Activated CD4-positive, alpha-beta T cell treated with anti-CD3 and anti-CD28 coated beads, Interleukin-2, amount 10 ng/mL, durations not matched to agents 7 days and 5 days (primary cell): ENCODE measurements at regions of chrX and their contacts with region 1.

Region 1: GRCh38 chrX:130060122-130061069 is 49.9 kb downstream of the ELF4 start:
- DNase-seq: peak; percentile 73
- H3K4me3 Mint-ChIP-seq: peak overlapping the region; percentile 68
- H3K27ac Mint-ChIP-seq: peak overlapping the region; percentile 72
- H3K4me1 Mint-ChIP-seq: peaks cover 9% of the 10 kb centered on the region
- H3K27me3 Mint-ChIP-seq: no peaks in the 10 kb centered on the region

Region 2: GRCh38 chrX:129925305-129926092 is 134.9 kb before region 1 on chrX:
- CTCF ChIA-PET with region 1: interaction called, 27 read pairs
- POLR2A ChIA-PET with region 1: no interaction called
- DNase-seq: peak; percentile 79
- H3K4me3 Mint-ChIP-seq: no peak overlapping the region
- H3K27ac Mint-ChIP-seq: peak overlapping the region; percentile 36
- H3K4me1 Mint-ChIP-seq: peaks cover 6% of the 10 kb centered on the region
- H3K27me3 Mint-ChIP-seq: no peaks in the 10 kb centered on the region

Region 3: DNA sequence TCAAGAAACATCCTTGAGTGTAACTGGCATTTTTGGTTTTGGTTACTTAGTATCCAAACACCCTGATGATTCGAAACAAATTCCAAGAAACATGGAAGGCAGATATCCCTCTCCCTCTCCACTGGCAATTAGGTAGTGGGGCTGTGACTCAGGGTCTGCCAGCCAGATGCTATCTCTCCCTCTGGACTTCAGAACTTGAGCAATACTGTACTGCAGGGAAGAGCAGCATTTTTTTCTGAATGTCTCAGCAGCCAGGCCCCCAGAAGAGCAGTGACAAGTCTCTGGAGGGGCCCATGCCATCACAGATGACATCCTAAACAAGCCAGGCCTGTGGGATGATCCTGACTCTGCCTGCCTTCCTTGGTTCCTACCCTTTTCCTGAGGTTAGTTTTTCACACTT is 115.2 kb before region 1 on chrX:
- CTCF ChIA-PET with region 1: no interaction called
- POLR2A ChIA-PET with region 1: no interaction called
- DNase-seq: no peak
- H3K4me3 Mint-ChIP-seq: no peak overlapping the region
- H3K27ac Mint-ChIP-seq: no peak overlapping the region
- H3K4me1 Mint-ChIP-seq: no peaks in the 10 kb centered on the region
- H3K27me3 Mint-ChIP-seq: peaks cover 7% of the 10 kb centered on the region

Region 4: GRCh38 chrX:130024127-130024526 is 36.3 kb before region 1 on chrX:
- CTCF ChIA-PET with region 1: interaction called, 13 read pairs
- POLR2A ChIA-PET with region 1: no interaction called
- DNase-seq: peak; percentile 85
- H3K4me3 Mint-ChIP-seq: peak overlapping the region; percentile 22
- H3K27ac Mint-ChIP-seq: peak overlapping the region; percentile 79
- H3K4me1 Mint-ChIP-seq: peaks cover 18% of the 10 kb centered on the region
- H3K27me3 Mint-ChIP-seq: no peaks in the 10 kb centered on the region

Region 5: DNA sequence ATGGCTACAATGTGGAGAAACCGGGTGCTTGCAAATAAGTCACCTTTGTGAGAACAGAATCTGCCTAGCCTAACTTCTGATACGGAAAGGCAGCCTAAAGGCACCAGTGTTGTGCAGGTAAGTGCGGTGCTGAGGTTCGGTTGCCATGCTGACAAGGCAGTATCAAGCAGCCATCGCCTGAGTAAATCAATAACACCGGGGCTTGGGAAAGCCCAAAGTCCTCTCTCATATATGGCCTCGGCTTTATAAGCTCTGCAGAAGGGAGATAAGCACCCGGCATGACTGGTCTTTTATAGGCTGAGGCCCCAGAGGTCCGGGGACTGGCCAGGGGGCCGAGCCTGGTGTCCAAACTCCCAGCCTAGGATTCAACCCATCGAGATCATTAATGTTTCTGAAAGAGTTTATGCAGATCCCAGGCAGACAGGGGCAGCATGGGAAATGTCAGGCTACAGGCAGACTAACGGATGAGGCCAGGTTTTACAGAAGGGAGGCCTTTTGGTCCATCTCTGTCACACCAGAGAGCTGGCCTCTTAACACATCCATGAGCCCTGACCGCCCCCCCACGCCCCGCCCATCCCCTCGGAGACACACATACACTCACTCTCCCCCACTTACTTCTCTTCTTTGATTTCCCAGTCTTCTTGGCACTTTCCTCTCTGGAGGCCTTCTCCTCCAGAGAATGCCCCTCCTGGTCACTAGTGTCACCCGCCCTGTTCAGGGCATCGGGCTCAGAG is 11.4 kb after region 1 on chrX:
- CTCF ChIA-PET with region 1: interaction called, 25 read pairs
- POLR2A ChIA-PET with region 1: no interaction called
- DNase-seq: no peak
- H3K4me3 Mint-ChIP-seq: no peak overlapping the region
- H3K27ac Mint-ChIP-seq: peak overlapping the region; percentile 50
- H3K4me1 Mint-ChIP-seq: no peaks in the 10 kb centered on the region
- H3K27me3 Mint-ChIP-seq: no peaks in the 10 kb centered on the region